ENCODE measurements at regions of chr1 and their contacts with region 1.

Region 1: GRCh38 chr1:156786655-156787054 is 19.3 kb downstream of the PRCC start:
- DNase-seq: no peak
- H3K4me3 ChIP-seq: no peak overlapping the region
- H3K27ac ChIP-seq: no peak overlapping the region
- H3K4me1 ChIP-seq: peaks cover 6% of the 10 kb centered on the region
- H3K27me3 ChIP-seq: no peaks in the 10 kb centered on the region
- CTCF ChIP-seq: no peak
- POLR2A ChIP-seq: no peak

Region 2: GRCh38 chr1:156838981-156839410 is 52.3 kb after region 1 on chr1:
- intact Hi-C with region 1: loop called (anchors 5 kb)
- DNase-seq: no peak
- H3K4me3 ChIP-seq: no peak overlapping the region
- H3K27ac ChIP-seq: no peak overlapping the region
- H3K4me1 ChIP-seq: no peaks in the 10 kb centered on the region
- H3K27me3 ChIP-seq: no peaks in the 10 kb centered on the region
- CTCF ChIP-seq: peak; percentile 47 to 68 (median 63)
- POLR2A ChIP-seq: no peak

Region 3: DNA sequence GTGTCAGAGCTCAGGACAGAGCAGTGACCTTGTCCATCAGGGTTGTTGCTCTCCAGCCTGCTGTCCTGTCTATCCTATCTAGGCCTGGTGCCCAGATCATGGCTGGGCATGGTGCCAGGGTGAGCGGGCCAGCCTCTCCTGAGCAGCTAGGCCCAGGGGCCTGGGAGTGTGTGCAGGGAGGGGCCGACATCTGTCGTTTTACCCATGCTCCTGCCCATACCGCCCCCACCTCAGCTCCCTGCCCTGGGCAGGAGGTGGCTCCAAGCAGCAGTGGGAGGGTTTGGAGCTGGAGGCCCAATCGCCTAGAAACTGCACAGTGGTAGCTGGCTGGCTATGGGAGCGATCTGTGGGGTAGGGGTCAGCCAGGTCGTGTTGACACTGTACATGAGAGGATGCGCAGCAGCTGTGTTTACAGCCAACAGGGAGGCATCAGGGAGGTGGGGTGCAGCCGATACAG is 65.8 kb after region 1 on chr1:
- intact Hi-C with region 1: no loop called
- DNase-seq: no peak
- H3K4me3 ChIP-seq: no peak overlapping the region
- H3K27ac ChIP-seq: no peak overlapping the region
- H3K4me1 ChIP-seq: peaks cover 7% of the 10 kb centered on the region
- H3K27me3 ChIP-seq: no peaks in the 10 kb centered on the region
- CTCF ChIP-seq: no peak
- POLR2A ChIP-seq: no peak

Region 4: GRCh38 chr1:156920233-156921052 is 133.8 kb after region 1 on chr1 and contains the start of gene LRRC71:
- intact Hi-C with region 1: no loop called
- DNase-seq: no peak
- H3K4me3 ChIP-seq: peak within 1 kb of the TSS in 1 of 2 donors; percentile 29
- H3K27ac ChIP-seq: no peak within 1 kb of the TSS
- H3K4me1 ChIP-seq: peaks cover 24% of the 10 kb centered on the region
- H3K27me3 ChIP-seq: peaks cover 9% of the 10 kb centered on the region
- CTCF ChIP-seq: peak; percentile 45 to 78 (median 67)
- POLR2A ChIP-seq: no peak
- total RNA-seq, gene LRRC71: not detected